ENCODE measurements at regions of chr11 and their contacts with region 1.

Region 1: GRCh38 chr11:45771566-45772448 is 33.1 kb upstream of the SLC35C1 start:
- DNase-seq: peak; percentile 97
- H3K4me3 ChIP-seq: peak overlapping the region; percentile 48
- H3K27ac ChIP-seq: no peak overlapping the region
- H3K4me1 ChIP-seq: peaks cover 13% of the 10 kb centered on the region
- H3K27me3 ChIP-seq: no peaks in the 10 kb centered on the region
- CTCF ChIP-seq: peak; percentile 100

Region 2: GRCh38 chr11:45110562-45110961 is 661.2 kb before region 1 on chr11:
- CTCF ChIA-PET with region 1: interaction called, 22 read pairs
- POLR2A ChIA-PET with region 1: no interaction called
- intact Hi-C with region 1: loop called (anchors 10 kb)
- DNase-seq: peak; percentile 92
- H3K4me3 ChIP-seq: no peak overlapping the region
- H3K27ac ChIP-seq: no peak overlapping the region
- H3K4me1 ChIP-seq: no peaks in the 10 kb centered on the region
- H3K27me3 ChIP-seq: peaks cover 12% of the 10 kb centered on the region
- CTCF ChIP-seq: peak; percentile 91

Region 3: GRCh38 chr11:45339729-45340519 is 431.9 kb before region 1 on chr11:
- CTCF ChIA-PET with region 1: interaction called, 39 read pairs
- POLR2A ChIA-PET with region 1: no interaction called
- intact Hi-C with region 1: loop called (anchors 1 kb)
- DNase-seq: peak; percentile 98
- H3K4me3 ChIP-seq: peak overlapping the region; percentile 15
- H3K27ac ChIP-seq: no peak overlapping the region
- H3K4me1 ChIP-seq: peaks cover 17% of the 10 kb centered on the region
- H3K27me3 ChIP-seq: no peaks in the 10 kb centered on the region
- CTCF ChIP-seq: peak; percentile 100

Region 4: GRCh38 chr11:45400591-45400990 is 371.2 kb before region 1 on chr11:
- CTCF ChIA-PET with region 1: interaction called, 16 read pairs
- POLR2A ChIA-PET with region 1: no interaction called
- intact Hi-C with region 1: no loop called
- DNase-seq: peak; percentile 42
- H3K4me3 ChIP-seq: no peak overlapping the region
- H3K27ac ChIP-seq: no peak overlapping the region
- H3K4me1 ChIP-seq: peaks cover 8% of the 10 kb centered on the region
- H3K27me3 ChIP-seq: no peaks in the 10 kb centered on the region
- CTCF ChIP-seq: no peak

Region 5: GRCh38 chr11:45444796-45445195 is 327.0 kb before region 1 on chr11:
- CTCF ChIA-PET with region 1: no interaction called
- POLR2A ChIA-PET with region 1: no interaction called
- intact Hi-C with region 1: no loop called
- DNase-seq: no peak
- H3K4me3 ChIP-seq: no peak overlapping the region
- H3K27ac ChIP-seq: no peak overlapping the region
- H3K4me1 ChIP-seq: peaks cover 11% of the 10 kb centered on the region
- H3K27me3 ChIP-seq: no peaks in the 10 kb centered on the region
- CTCF ChIP-seq: no peak

Region 6: DNA sequence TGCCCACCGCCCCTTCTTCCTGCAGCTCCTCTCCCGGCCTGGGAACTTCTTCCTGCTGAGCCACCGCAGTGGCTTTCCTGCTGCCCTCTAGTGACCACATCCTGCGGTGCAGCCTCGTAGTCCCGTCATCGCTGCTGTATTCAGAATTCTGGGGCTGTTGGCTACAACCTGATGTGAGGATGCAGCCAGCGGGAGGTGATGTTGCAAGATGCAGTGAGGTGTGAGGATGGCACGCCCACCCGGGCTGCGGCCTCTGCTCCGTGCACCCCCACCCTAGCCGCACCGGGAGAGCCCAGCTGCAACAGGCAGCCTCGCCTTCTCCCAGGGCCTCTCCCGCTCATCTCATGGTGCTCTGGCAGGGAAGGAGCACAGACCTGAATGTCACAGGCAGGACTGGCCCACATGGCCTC is 116.5 kb before region 1 on chr11:
- CTCF ChIA-PET with region 1: interaction called, 24 read pairs
- POLR2A ChIA-PET with region 1: no interaction called
- intact Hi-C with region 1: no loop called
- DNase-seq: peak; percentile 93
- H3K4me3 ChIP-seq: no peak overlapping the region
- H3K27ac ChIP-seq: no peak overlapping the region
- H3K4me1 ChIP-seq: peaks cover 6% of the 10 kb centered on the region
- H3K27me3 ChIP-seq: no peaks in the 10 kb centered on the region
- CTCF ChIP-seq: peak; percentile 100

Region 7: DNA sequence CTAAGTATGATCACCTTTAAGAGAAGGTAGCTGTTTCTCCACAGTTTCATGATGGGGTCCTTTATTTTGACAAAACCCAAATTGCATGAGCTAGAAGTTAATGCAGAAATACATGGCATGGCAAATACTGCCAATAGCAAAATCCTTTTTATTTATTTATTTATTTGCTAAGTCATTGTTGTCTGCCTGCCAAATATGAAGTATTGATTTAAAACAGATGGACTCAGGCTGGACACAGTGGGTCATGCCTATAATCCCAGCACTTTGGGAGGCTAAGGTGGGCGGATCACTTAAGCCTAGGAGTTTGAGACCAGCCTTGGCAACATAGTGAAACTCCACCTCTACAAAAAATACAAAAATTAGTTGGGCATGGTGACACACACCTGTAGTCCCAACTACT is 203.0 kb after region 1 on chr11:
- CTCF ChIA-PET with region 1: interaction called, 3 read pairs
- POLR2A ChIA-PET with region 1: interaction called, 12 read pairs
- intact Hi-C with region 1: no loop called
- DNase-seq: no peak
- H3K4me3 ChIP-seq: no peak overlapping the region
- H3K27ac ChIP-seq: no peak overlapping the region
- H3K4me1 ChIP-seq: no peaks in the 10 kb centered on the region
- H3K27me3 ChIP-seq: no peaks in the 10 kb centered on the region
- CTCF ChIP-seq: no peak

Measured in A673 (cell line).